Mammary epithelial cell (primary cell): ENCODE measurements at regions of chr10 and their contacts with region 1.

Region 1: GRCh38 chr10:21495752-21496342 is 29.6 kb downstream of the SKIDA1 start:
- DNase-seq: peak; percentile 83
- H3K4me3 ChIP-seq: peak overlapping the region; percentile 69 to 84 (median 80)
- H3K27ac ChIP-seq: no peak overlapping the region
- H3K4me1 ChIP-seq: peaks cover 15% of the 10 kb centered on the region
- H3K27me3 ChIP-seq: peaks cover 2% of the 10 kb centered on the region
- CTCF ChIP-seq: peak; percentile 64 to 81

Region 2: GRCh38 chr10:21278491-21279239 is 217.2 kb before region 1 on chr10:
- CTCF ChIA-PET with region 1: no interaction called
- dilution Hi-C with region 1: no loop called
- in situ Hi-C with region 1: loop called in 1 of 2 experiments (anchors 10 kb)
- intact Hi-C with region 1: loop called (anchors 1 kb)
- DNase-seq: peak; percentile 78
- H3K4me3 ChIP-seq: no peak overlapping the region
- H3K27ac ChIP-seq: no peak overlapping the region
- H3K4me1 ChIP-seq: peaks cover 4% of the 10 kb centered on the region
- H3K27me3 ChIP-seq: no peaks in the 10 kb centered on the region
- CTCF ChIP-seq: peak; percentile 66 to 84

Region 3: DNA sequence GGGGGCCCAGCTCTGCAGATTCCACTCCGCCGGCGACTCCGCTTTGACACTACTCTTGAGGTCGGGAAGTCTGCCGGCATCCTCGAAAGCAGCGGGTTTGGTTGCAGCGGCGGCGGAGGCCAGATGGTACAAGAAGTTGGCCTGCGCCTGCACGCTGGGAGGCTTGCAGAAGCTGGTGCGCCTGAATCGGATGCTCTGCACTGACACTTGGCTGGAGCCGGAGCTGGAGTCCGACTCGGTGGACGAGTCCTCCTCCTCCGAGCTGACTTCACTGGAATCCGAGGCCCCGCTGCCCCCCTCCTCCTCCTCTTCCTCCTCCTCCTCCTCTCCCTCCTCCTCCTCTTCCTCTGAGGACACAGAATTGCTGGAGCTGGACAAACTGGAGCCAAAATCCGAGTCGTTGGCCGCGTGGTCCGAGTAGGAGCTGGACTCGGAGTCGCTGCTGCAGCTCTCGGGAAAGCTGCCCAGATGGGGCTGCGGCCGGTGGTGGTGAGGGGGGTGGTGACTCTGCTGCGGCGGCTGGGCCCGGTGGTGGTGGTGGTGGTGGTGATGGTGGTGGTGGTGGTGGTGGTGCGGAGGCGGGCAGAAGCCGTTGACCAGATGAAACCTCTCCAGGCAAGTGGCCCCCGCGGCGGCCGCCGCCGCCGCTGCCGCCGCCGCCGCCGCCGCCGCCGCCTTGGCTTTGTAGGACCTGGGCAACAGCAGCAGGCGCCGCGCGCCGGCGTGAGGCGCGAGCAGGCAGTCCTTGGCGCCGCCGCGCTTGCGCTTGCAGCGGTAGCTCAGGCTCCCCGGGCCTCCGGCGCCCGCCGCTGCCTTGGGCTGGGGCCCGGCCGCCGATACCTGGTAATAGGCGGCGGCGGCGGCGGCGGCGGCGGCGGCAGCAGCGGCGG is 20.6 kb after region 1 on chr10:
- CTCF ChIA-PET with region 1: no interaction called
- dilution Hi-C with region 1: no loop called
- in situ Hi-C with region 1: no loop called
- intact Hi-C with region 1: loop called (anchors 2 kb)
- DNase-seq: peak; percentile 56
- H3K4me3 ChIP-seq: peak overlapping the region; percentile 44 to 68 (median 67)
- H3K27ac ChIP-seq: no peak overlapping the region
- H3K4me1 ChIP-seq: peaks cover 18% of the 10 kb centered on the region
- H3K27me3 ChIP-seq: no peaks in the 10 kb centered on the region
- CTCF ChIP-seq: no peak

Region 4: DNA sequence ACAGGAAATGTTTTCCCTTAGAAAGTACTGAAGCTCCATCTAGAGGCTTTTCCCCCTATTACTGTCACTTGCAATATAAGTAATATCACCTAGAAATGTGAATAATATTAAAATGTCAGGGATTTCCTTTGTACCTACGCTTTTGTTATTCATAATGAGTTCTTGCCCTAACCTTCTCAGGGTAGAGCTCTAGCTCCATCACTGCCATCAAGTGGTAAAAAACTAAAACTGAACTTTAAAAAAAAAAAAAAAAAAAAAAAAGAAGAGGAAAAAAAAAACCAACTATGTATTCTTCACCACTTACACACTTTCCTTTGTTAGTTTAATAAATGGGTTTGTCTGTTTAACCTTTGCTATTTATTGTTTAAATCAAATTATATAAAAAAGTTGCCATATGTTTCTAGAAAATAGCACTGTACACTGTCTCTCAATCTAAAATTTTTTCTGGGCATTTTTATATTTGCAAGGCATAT is 457.8 kb after region 1 on chr10:
- CTCF ChIA-PET with region 1: no interaction called
- dilution Hi-C with region 1: no loop called
- in situ Hi-C with region 1: loop called in 1 of 2 experiments (anchors 25 kb)
- intact Hi-C with region 1: loop called (anchors 1 kb)
- DNase-seq: peak; percentile 64
- H3K4me3 ChIP-seq: no peak overlapping the region
- H3K27ac ChIP-seq: no peak overlapping the region
- H3K4me1 ChIP-seq: no peaks in the 10 kb centered on the region
- H3K27me3 ChIP-seq: no peaks in the 10 kb centered on the region
- CTCF ChIP-seq: peak; percentile 38 to 61

Region 5: GRCh38 chr10:22316285-22317120 is 820.7 kb after region 1 on chr10 and contains the start of gene COMMD3:
- CTCF ChIA-PET with region 1: no interaction called
- dilution Hi-C with region 1: no loop called
- in situ Hi-C with region 1: no loop called
- intact Hi-C with region 1: loop called (anchors 5 kb)
- DNase-seq: peak; percentile 84
- H3K4me3 ChIP-seq: peak within 1 kb of the TSS; percentile 75 to 92 (median 78)
- H3K27ac ChIP-seq: peak within 1 kb of the TSS; percentile 86
- H3K4me1 ChIP-seq: peaks cover 16% of the 10 kb centered on the region
- H3K27me3 ChIP-seq: no peaks in the 10 kb centered on the region
- CTCF ChIP-seq: no peak
- total RNA-seq, gene COMMD3: 26.7 to 48.5 TPM